OCI-LY7 (cell line): ENCODE measurements at regions of chr6 and their contacts with region 1.

Region 1: GRCh38 chr6:112043032-112044007 is 10.6 kb upstream of the CCN6 start:
- DNase-seq: peak; percentile 94
- H3K4me3 ChIP-seq: peak overlapping the region; percentile 70
- H3K27ac ChIP-seq: peak overlapping the region; percentile 75
- H3K4me1 ChIP-seq: peaks cover 6% of the 10 kb centered on the region
- CTCF ChIP-seq: peak; percentile 97

Region 2: GRCh38 chr6:111057074-111057752 is 986.1 kb before region 1 on chr6:
- CTCF ChIA-PET with region 1: no interaction called
- POLR2A ChIA-PET with region 1: no interaction called
- intact Hi-C with region 1: loop called (anchors 10 kb)
- DNase-seq: peak; percentile 55
- H3K4me3 ChIP-seq: no peak overlapping the region
- H3K27ac ChIP-seq: no peak overlapping the region
- H3K4me1 ChIP-seq: no peaks in the 10 kb centered on the region
- CTCF ChIP-seq: peak; percentile 92

Region 3: DNA sequence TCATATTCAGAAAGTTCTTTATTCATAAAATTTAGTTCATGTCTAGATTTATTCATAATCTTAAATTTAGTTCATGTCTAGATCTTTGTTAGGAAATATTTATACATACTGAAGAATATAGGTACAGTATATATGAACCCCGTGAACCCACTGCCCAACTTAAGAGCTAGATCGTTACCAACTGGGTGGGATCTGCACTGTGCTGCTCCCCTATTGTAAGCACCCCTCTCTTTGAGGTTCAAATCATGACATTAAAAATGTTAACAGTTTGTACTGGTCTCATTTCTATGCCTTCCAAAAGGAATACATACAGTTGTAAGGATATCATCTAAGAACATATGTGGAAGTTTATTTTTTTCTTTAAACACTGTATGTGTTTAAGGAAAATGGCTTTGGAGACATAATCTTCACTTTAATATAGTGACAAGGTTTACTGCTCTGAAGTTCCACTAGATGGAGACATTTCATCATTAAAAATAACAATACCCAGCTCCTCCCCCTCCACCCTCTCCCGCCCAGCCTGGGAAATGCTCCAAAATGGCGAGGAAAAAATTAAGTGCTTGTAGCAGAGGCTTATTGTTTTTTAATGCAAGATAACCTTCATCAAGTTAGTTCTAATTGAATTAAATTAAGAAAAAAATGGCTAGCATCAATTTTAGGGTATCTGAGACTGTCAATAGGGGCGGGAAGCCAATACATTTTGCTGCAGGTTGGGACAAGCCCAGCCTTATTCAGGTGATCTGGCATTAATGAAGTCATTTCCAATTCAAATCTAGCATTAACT is 333.5 kb before region 1 on chr6:
- CTCF ChIA-PET with region 1: interaction called, 3 read pairs
- POLR2A ChIA-PET with region 1: interaction called, 8 read pairs
- intact Hi-C with region 1: loop called (anchors 1 kb)
- DNase-seq: peak; percentile 74
- H3K4me3 ChIP-seq: no peak overlapping the region
- H3K27ac ChIP-seq: no peak overlapping the region
- H3K4me1 ChIP-seq: peaks cover 3% of the 10 kb centered on the region
- CTCF ChIP-seq: peak; percentile 95

Region 4: DNA sequence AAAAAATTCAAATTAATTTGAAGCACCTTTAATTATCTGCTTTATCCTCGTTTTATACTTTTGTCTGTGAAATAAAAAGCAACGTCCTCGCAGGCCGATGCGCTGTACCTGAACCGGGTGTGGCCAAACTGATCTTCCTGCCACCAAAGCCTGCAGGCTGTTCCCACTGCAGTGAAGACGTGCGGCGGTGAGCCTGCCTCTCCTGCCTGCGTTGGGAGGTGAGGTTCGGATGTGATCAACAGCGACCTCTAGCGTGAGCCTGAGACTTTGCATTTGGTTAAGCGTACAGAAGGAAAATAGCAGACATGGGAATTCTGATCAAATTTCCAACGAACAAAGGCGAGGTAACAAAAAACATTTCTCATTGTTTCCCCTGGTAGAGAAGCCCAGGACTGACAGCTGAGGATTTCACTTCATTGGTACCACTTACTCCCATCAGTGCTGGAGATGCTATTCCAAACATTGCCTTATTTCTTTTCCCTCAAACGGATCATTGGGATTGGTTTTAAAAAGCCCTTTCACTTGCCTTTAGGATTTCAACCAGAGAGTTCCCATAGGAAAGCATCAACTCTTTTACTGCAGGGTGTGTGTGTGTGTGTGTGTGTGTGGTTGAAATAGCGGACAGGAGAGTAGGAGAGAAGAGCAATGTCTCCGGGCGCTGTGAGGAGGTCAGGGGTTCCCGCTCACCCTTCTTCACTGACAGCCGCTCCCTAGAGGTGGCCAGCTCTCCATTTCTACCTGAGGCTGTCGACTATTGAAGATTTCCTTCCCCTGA is 46.1 kb before region 1 on chr6:
- CTCF ChIA-PET with region 1: no interaction called
- POLR2A ChIA-PET with region 1: no interaction called
- intact Hi-C with region 1: loop called (anchors 1 kb)
- DNase-seq: peak; percentile 79
- H3K4me3 ChIP-seq: no peak overlapping the region
- H3K27ac ChIP-seq: no peak overlapping the region
- H3K4me1 ChIP-seq: no peaks in the 10 kb centered on the region
- CTCF ChIP-seq: peak; percentile 97